Prostate gland (tissue), 2 donors: ENCODE measurements at regions of chr7 and their contacts with region 1.

Region 1: GRCh38 chr7:17640730-17641377 is 299.4 kb downstream of the SNX13 start:
- DNase-seq: no peak
- H3K4me3 ChIP-seq: no peak overlapping the region
- H3K27ac ChIP-seq: no peak overlapping the region
- H3K4me1 ChIP-seq: no peaks in the 10 kb centered on the region
- H3K27me3 ChIP-seq: no peaks in the 10 kb centered on the region
- CTCF ChIP-seq: peak in 3 of 4 experiments; percentile 21 to 53 (median 32)
- POLR2A ChIP-seq: no peak

Region 2: DNA sequence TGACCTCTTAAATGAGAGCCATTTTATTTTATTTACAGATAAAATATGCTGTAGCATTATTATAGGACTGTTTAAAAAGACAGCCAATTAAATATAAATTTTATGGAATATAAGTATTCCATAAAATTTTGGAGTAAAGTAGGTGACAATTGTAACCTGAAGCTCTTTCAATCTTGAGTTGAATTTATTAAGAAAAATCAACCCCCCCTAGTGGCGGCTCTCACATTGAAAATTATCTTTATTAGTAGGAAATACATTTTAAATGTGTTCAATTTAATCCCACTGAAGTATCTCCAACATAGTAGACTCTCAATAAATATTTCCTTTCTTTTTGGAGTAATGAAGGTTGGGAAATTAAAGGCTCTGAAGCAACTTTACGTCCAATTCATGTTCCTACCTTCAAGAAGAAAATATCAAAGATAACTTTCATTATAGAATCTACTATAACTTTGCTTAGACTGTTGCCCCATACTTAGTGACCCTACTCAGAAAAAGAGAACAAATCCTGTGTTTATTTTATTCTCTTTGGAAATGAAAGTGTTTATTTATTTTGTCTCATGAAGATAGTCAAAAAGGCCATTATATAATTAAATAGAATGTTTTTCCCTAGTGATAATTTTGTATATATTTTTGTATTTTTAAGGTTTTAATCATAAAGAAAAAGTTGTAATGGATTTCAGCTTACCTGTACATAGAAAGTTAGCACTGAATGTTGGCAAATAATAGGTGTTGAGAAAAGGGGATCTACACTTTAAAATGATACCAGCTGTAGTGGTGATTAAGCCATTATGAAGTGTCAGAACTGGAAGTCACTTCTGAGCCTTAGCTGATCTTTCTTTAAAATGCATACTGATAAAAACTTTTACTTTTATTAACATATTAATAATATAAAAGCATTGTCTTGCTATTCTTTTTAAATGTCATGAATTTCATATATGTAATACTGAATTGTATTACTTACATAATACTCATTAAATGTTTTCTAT is 339.1 kb before region 1 on chr7:
- intact Hi-C with region 1: loop called (anchors 10 kb)
- DNase-seq: peak; percentile 58
- H3K4me3 ChIP-seq: peak overlapping the region in 1 of 2 donors; percentile 76
- H3K27ac ChIP-seq: peak overlapping the region in 1 of 2 donors; percentile 27
- H3K4me1 ChIP-seq: no peaks in the 10 kb centered on the region
- H3K27me3 ChIP-seq: no peaks in the 10 kb centered on the region
- CTCF ChIP-seq: peak; percentile 52 to 71 (median 70)
- POLR2A ChIP-seq: no peak

Region 3: DNA sequence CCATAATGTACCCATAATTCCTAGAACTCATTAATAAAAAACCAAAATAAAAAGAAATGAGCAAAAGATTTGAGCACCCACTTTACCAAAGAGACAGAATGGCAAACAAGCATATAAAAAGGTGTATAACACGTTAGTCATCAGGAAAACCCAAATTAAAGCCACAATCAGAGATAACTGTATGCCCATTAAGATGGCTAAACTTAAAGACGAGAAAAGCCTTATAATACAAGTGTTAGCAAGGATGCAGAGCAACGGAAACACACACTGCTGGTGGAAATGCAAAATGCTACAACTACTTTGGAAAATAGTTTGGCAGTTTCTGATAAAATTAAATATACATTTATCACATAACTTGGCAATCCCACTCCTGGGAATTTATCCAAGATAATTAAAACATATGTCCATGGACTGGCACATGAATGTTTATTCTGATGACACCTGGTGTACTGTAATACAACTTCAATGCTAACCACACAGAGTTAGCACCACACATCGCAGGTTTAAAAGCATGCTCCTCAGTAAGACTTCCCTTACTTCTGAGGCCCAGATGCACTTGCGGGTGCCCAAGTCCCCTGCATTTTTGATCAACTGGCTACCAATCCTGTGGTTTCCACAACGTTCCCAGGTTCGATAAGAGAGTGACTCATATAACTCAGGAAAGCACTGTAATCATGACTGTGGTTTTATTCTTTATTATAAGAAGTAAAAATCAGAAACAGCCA is 140.8 kb after region 1 on chr7:
- intact Hi-C with region 1: no loop called
- DNase-seq: no peak
- H3K4me3 ChIP-seq: no peak overlapping the region
- H3K27ac ChIP-seq: no peak overlapping the region
- H3K4me1 ChIP-seq: no peaks in the 10 kb centered on the region
- H3K27me3 ChIP-seq: no peaks in the 10 kb centered on the region
- CTCF ChIP-seq: no peak
- POLR2A ChIP-seq: no peak

Region 4: DNA sequence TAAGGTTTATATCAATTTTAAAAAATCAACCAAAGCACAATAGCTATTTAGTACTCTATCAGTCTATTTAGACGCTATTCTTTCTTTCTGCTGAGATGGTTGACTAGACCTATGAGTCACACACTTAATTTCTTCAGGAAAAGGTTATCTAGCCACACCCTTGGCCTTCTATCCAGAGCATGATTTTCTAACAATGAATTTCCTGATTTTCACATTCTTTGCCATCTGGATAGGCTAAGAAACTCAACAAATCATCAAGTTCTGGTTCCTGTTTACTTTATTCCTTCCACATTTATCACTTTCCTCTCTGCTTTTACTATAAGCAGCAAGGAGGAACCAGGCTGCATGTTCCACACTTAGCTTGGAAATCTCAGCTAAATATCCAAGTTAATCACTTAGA is 378.7 kb after region 1 on chr7:
- intact Hi-C with region 1: no loop called
- DNase-seq: no peak
- H3K4me3 ChIP-seq: no peak overlapping the region
- H3K27ac ChIP-seq: no peak overlapping the region
- H3K4me1 ChIP-seq: no peaks in the 10 kb centered on the region
- H3K27me3 ChIP-seq: no peaks in the 10 kb centered on the region
- CTCF ChIP-seq: no peak
- POLR2A ChIP-seq: no peak